ENCODE measurements at regions of chr17 and their contacts with region 1.

Region 1: GRCh38 chr17:8991514-8992285 is 26.2 kb upstream of the PIK3R5 start:
- DNase-seq: peak; percentile 64 to 83
- H3K4me3 ChIP-seq: no peak overlapping the region
- H3K27ac ChIP-seq: no peak overlapping the region
- H3K4me1 ChIP-seq: no peaks in the 10 kb centered on the region
- H3K27me3 ChIP-seq: peaks cover 0 to 2% of the 10 kb centered on the region in 2 donors
- CTCF ChIP-seq: peak; percentile 84 to 88

Region 2: DNA sequence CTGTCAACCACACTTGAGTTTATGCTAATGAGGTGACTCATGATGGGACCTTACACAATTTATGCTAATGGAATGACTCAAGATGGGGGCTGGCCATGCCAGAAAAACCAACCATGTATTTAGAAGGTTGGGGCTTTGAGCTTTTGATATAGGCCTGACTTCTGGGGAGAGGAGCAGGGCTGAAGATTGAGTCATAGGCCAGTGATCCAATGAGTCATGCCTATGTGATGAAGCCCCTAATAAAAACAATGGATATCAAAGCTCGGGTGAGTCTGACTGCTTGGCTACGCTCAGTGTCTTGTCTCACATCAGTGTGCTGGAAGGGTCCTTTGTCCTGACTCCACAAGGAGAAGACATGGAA is 199.8 kb before region 1 on chr17:
- intact Hi-C with region 1: no loop called
- DNase-seq: no peak
- H3K4me3 ChIP-seq: no peak overlapping the region
- H3K27ac ChIP-seq: no peak overlapping the region
- H3K4me1 ChIP-seq: no peaks in the 10 kb centered on the region
- H3K27me3 ChIP-seq: no peaks in the 10 kb centered on the region
- CTCF ChIP-seq: no peak

Region 3: DNA sequence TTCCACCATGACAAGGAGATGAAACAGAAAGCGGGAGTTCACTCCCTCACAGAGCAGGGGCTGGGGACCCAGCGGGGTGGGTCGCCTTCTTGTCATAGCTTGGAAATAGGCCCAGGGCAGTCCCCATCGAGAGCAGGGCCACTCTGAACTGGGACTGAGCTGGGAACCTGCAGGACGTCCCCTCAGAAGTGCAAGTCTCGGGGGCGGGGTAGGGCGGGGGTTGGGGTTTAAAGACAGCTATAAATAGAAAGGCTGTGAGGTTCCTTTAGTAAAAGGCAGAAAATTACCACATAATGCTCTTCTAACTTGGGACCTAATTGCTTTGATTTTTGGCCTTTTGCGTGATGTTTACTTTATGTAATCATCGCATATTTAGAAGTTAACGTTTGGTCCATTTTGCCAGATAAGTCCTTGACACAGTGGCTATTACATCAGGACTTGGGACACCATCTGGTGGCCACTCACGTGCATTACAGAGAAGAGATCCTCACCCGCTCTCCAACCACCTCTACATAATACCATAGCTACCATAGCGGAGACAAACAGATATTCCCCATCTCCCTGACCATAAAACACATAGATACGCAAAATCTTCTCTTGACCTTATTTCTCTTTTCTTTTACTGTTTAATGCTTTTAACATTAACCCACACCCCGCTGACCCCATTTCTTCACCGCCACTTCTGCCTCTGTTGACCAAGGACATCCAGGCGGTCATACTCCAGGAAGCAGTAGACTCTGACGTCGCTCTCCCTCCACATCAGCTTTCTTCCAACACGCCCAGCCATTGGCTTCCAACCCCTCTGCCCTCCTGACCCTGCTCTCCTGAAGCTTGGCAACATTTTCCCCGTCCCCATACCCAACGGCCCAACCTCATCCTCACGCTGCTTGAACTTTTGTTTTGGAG is 96.8 kb before region 1 on chr17:
- intact Hi-C with region 1: no loop called
- DNase-seq: peak; percentile 70 to 71
- H3K4me3 ChIP-seq: no peak overlapping the region
- H3K27ac ChIP-seq: no peak overlapping the region
- H3K4me1 ChIP-seq: peaks cover 0 to 4% (median 0%) of the 10 kb centered on the region in 4 donors
- H3K27me3 ChIP-seq: peaks cover 0 to 12% of the 10 kb centered on the region in 2 donors
- CTCF ChIP-seq: peak; percentile 80 to 84

Region 4: GRCh38 chr17:8925808-8926207 is 65.9 kb before region 1 on chr17:
- intact Hi-C with region 1: no loop called
- DNase-seq: no peak
- H3K4me3 ChIP-seq: no peak overlapping the region
- H3K27ac ChIP-seq: no peak overlapping the region
- H3K4me1 ChIP-seq: no peaks in the 10 kb centered on the region
- H3K27me3 ChIP-seq: peaks cover 0 to 10% of the 10 kb centered on the region in 2 donors
- CTCF ChIP-seq: no peak

Region 5: GRCh38 chr17:9291912-9292560 is 300.3 kb after region 1 on chr17:
- intact Hi-C with region 1: loop called (anchors 2 kb)
- DNase-seq: peak; percentile 57 to 82
- H3K4me3 ChIP-seq: no peak overlapping the region
- H3K27ac ChIP-seq: peak overlapping the region; percentile 78 to 82
- H3K4me1 ChIP-seq: peaks cover 0 to 19% (median 10%) of the 10 kb centered on the region in 4 donors
- H3K27me3 ChIP-seq: no peaks in the 10 kb centered on the region
- CTCF ChIP-seq: peak; percentile 78 to 88

Region 6: DNA sequence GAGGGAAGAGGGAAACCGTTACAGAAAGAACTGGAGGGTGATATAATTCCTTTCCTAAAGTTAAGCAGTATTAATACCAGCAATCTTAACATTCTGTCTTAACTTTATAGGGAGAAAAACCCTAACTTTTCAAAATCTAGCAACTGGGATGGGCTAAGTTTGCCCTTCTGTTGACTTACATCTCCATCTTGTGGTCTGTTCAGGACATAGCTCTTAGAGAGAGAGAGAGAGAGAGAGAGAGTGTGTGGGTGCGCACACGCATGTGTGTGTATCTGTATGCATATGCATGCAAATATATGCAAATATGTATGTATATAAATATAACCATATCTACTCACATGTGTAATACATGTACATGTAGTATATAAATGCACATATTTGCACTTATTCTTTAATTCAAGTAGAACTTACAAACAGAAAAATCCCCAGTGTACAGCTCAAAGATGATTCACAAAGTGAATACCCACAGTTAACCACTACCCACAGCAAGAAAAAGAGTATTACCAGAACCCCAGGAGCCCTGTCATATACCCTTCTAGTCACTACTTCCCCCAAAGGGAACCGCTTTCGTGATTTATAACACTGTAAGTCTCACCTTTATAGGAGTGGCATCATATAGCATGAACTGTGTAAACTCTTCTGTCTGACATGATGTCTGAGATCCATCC is 537.5 kb after region 1 on chr17:
- intact Hi-C with region 1: loop called (anchors 5 kb)
- DNase-seq: no peak
- H3K4me3 ChIP-seq: no peak overlapping the region
- H3K27ac ChIP-seq: no peak overlapping the region
- H3K4me1 ChIP-seq: no peaks in the 10 kb centered on the region
- H3K27me3 ChIP-seq: no peaks in the 10 kb centered on the region
- CTCF ChIP-seq: peak; percentile 23 to 32